ENCODE measurements at regions of chr10 and their contacts with region 1.

Region 1: DNA sequence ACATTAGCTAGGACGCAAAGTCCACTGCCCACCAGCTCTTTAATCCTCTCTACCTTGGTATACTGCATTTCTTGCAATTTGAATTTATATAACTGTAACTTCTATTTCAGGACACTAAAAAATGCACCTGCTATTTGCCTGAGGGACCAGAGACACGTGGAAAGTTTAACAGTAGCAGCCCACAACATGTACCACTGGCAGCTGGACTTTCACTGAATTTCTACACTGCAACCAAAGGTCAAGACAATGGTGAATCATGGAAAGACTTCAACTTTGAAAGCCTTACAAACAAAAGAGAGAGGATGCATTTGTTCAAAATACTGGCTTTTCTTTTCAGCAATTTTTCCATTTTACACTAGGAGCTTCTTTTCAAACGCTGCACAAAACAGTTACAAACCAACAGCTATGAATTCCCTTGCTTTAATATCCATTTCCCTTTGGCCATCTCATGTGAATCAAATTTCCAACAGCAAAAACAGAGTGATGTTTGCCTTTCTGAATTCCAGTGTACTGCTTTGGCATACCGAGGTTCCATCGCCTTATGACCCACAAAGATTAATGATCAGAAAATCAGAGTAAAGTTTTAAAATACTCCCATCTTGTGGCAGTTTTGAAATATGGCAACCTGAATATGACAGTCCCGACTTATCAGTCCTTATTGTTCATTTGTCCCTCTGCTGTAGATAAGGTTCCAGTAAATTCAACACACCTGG is 29.9 kb upstream of the HNRNPH3 start:
- DNase-seq: peak; percentile 48 to 69 (median 67)
- H3K4me3 ChIP-seq: no peak overlapping the region
- H3K27ac ChIP-seq: no peak overlapping the region
- H3K4me1 ChIP-seq: peaks cover 0 to 6% (median 0%) of the 10 kb centered on the region in 4 experiments
- H3K27me3 ChIP-seq: no peaks in the 10 kb centered on the region

Region 2: DNA sequence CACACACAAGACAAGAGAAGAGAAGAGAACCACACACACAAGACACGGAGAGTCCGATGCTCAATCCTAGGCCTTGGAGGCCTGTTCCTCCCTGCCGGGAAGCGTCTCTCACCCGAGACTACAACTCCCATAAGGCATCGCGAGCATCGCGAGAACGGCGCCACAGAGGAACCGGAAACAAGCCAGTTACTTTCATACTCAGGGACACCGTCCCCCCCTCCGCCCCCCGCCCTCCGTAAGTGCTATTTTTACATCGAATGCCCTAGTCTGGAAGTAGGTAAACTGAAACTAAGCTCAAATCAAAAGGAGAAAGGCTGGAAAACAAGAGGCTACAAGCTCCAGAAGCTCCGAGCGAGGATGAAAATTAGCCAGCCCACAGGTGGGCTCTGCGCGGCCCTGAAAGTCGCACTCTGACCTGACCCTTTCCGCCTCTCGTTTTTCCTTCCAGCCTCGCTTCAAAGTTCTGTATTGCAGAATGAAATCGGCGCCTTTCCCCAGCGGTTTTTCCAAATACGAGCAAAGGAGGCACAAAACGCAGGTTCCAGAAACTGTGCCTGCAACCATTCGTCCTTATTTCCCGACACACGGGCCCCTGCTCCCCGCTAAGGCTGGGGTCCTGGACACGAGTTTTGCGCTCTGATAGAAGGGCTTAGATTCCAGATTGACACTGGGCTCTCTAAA is 452.5 kb before region 1 on chr10:
- CTCF ChIA-PET with region 1: interaction called, 14 read pairs
- POLR2A ChIA-PET with region 1: no interaction called
- DNase-seq: peak; percentile 92 to 96 (median 96)
- H3K4me3 ChIP-seq: peak overlapping the region; percentile 76 to 99 (median 90)
- H3K27ac ChIP-seq: peak overlapping the region; percentile 92 to 94
- H3K4me1 ChIP-seq: peaks cover 0 to 5% (median 4%) of the 10 kb centered on the region in 4 experiments
- H3K27me3 ChIP-seq: no peaks in the 10 kb centered on the region

Region 3: DNA sequence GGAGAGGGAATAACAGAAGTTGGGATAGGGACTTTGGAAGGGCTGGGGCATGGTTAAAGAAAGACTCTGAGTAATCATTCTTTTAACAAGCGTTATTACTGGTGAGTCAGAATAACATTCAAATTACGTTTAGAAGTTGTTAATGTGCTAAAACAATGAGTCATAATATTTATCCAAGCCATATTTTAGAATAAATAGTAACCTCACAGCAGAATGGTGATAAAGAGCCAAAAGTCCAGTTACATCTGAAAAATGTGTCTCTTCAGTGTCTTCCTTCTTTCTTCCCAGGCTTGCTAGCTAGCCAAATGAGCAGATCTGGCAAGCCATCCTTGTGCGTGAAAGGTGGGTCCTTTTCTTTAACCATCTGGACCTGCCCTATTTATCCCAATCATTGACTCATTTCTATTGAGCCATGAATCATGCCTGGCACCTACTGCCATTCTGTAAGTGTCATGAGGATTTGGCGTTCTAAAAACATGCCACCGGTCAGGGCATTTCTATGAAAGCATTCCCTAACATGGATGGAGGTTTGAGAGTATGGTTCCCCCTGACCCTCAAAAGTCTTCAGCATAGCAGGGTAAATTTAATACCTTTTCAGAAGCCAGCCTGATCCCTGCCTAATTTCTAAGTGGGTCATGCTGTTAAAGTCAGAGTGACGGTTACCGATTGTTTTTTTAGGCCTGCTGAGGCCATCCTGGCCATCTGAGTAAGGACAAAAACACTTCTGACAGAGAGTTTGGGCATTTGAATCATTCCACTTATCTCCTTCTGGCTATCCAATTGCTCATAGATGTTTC is 165.8 kb before region 1 on chr10:
- CTCF ChIA-PET with region 1: no interaction called
- POLR2A ChIA-PET with region 1: no interaction called
- DNase-seq: no peak
- H3K4me3 ChIP-seq: no peak overlapping the region
- H3K27ac ChIP-seq: no peak overlapping the region
- H3K4me1 ChIP-seq: no peaks in the 10 kb centered on the region
- H3K27me3 ChIP-seq: no peaks in the 10 kb centered on the region

Region 4: GRCh38 chr10:68156373-68157185 is 145.4 kb before region 1 on chr10:
- CTCF ChIA-PET with region 1: interaction called, 12 read pairs
- POLR2A ChIA-PET with region 1: no interaction called
- DNase-seq: peak; percentile 42 to 82 (median 72)
- H3K4me3 ChIP-seq: no peak overlapping the region
- H3K27ac ChIP-seq: no peak overlapping the region
- H3K4me1 ChIP-seq: no peaks in the 10 kb centered on the region
- H3K27me3 ChIP-seq: peaks cover 0 to 2% (median 0%) of the 10 kb centered on the region in 5 experiments

Region 5: DNA sequence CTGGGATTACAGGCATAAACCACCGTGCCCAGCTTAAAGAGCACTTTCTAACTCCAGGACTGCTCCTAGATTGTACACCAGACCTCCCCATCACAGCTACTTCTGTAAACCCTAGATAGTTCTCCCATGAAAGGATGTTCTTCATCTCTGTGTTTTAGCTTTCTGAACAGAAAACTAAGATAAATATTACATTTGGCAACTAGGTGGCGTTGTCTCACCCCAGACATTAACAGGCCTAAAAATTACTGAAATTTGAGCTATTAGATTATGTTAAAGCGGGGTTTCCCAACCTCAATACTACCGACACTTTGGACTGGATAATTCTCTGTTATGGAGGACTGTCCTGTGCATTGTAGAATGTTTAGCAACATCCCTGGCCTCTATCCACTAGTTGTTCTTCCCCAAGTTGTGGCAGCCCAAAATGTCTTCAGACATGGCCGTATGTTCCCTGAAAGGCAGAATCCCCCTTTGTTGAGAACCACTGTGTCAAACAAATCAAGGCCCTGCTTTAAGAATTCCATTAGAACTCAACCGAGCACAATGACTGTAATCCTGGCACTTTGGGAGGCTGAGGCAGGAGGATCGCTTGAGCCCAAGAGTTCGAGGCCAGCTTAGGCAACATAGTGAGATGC is 89.1 kb before region 1 on chr10:
- CTCF ChIA-PET with region 1: interaction called, 51 read pairs
- POLR2A ChIA-PET with region 1: no interaction called
- DNase-seq: peak; percentile 30 to 61 (median 45)
- H3K4me3 ChIP-seq: no peak overlapping the region
- H3K27ac ChIP-seq: no peak overlapping the region
- H3K4me1 ChIP-seq: no peaks in the 10 kb centered on the region
- H3K27me3 ChIP-seq: no peaks in the 10 kb centered on the region

Region 6: GRCh38 chr10:68288717-68289116 is 13.2 kb before region 1 on chr10:
- CTCF ChIA-PET with region 1: interaction called, 13 read pairs
- POLR2A ChIA-PET with region 1: no interaction called
- DNase-seq: no peak
- H3K4me3 ChIP-seq: no peak overlapping the region
- H3K27ac ChIP-seq: no peak overlapping the region
- H3K4me1 ChIP-seq: no peaks in the 10 kb centered on the region
- H3K27me3 ChIP-seq: no peaks in the 10 kb centered on the region